Gastrocnemius medialis (tissue), 4 donors: ENCODE measurements at regions of chr1 and their contacts with region 1.

Region 1: DNA sequence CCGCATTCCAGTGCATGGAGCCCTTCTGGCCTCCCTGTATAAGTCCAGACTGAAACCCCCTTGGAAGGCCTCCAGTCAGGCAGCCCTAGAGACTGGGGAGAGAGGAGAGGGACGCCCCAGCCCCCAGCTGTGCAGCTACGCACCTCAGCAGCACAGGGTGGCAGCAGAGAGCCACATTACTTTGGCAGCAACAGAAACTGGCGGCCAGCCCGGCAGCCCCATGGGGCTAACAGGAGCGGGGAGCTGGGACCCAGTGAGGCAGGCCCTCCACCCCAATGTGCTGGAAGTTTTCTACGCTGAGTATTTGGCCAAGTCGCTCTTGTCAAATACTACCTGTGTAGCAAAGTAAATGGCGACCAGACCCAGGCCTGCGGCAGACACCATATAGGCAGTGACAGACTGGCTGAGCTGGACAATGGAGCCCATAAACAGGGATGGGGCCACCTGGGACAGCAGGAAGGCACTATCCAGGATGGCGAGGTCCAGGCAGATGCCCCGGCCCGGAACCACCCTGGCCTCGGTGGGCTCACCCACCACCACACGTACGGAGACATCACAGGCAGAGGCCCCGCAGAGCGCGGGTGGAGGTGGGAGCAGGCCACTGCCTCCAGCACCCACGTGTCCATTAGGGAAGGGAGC is 21.2 kb downstream of the SLC45A3 start:
- DNase-seq: peak; percentile 48 to 62
- ATAC-seq: peak; percentile 68 to 71
- H3K4me3 ChIP-seq: no peak overlapping the region
- H3K27ac ChIP-seq: no peak overlapping the region
- H3K4me1 ChIP-seq: peaks cover 0 to 4% of the 10 kb centered on the region in 2 donors
- H3K27me3 ChIP-seq: no peaks in the 10 kb centered on the region
- CTCF ChIP-seq: peak; percentile 78 to 90 (median 88)
- POLR2A ChIP-seq: no peak

Region 2: GRCh38 chr1:205591522-205592351 is 67.3 kb before region 1 on chr1:
- in situ Hi-C with region 1: loop called (anchors 5 kb)
- intact Hi-C with region 1: loop called (anchors 1 kb)
- DNase-seq: peak; percentile 58 to 74
- ATAC-seq: peak; percentile 80 to 94
- H3K4me3 ChIP-seq: peak overlapping the region; percentile 38 to 76 (median 46)
- H3K27ac ChIP-seq: no peak overlapping the region
- H3K4me1 ChIP-seq: no peaks in the 10 kb centered on the region
- H3K27me3 ChIP-seq: no peaks in the 10 kb centered on the region
- CTCF ChIP-seq: peak; percentile 98 to 99 (median 99)
- POLR2A ChIP-seq: no peak

Region 3: DNA sequence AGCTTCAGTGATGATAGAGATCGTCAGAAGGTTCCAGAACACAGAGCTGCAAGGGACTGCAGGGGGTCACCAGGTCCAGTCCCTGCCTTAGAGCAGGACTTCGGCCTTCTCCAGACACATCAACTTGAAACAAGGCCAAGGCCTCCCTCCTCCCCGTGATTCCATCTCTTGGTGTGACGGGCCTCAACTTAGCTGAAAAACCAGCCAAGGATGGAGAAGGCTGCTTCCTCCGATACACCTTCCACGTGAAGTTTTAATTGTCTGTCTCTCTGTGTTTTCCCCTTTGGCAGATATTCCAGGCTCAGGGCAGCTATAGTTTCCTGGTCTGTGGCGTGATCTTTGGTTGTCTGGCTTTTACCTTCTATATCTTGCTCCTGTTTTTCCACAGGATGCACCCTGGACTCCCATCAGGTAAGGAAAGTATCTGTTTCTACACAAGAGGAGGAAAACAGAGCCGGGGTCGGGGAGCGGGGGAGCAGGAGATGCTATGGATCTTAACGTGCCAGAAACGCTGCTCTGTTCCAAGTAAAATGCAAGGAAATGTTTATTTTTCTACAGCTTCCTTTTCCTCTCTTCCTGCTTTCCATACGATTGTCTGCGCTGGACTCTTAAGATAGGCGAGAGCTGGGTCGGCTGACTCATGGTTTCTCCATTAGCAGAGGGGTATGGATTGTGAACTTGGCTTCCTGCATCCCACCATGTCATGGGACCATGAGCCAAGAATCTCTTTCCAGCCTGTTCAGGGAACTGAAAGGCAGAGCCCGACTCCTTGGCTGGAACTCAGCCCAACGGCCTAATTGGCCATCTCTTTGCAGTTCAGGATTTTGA is 60.0 kb before region 1 on chr1:
- in situ Hi-C with region 1: loop called in 3 of 4 experiments (anchors 5 kb)
- intact Hi-C with region 1: no loop called
- DNase-seq: no peak
- ATAC-seq: peak in 1 of 2 donors; percentile 66
- H3K4me3 ChIP-seq: no peak overlapping the region
- H3K27ac ChIP-seq: peak overlapping the region; percentile 34 to 64 (median 51)
- H3K4me1 ChIP-seq: peaks cover 7 to 19% of the 10 kb centered on the region in 2 donors
- H3K27me3 ChIP-seq: no peaks in the 10 kb centered on the region
- CTCF ChIP-seq: no peak
- POLR2A ChIP-seq: no peak

Region 4: GRCh38 chr1:205711104-205712020 is 52.3 kb after region 1 on chr1:
- in situ Hi-C with region 1: loop called in 2 of 4 experiments (anchors 5 kb)
- intact Hi-C with region 1: loop called (anchors 1 kb)
- DNase-seq: peak; percentile 32
- ATAC-seq: peak; percentile 75 to 79
- H3K4me3 ChIP-seq: no peak overlapping the region
- H3K27ac ChIP-seq: peak overlapping the region in 1 of 4 donors; percentile 49
- H3K4me1 ChIP-seq: peaks cover 18 to 22% of the 10 kb centered on the region in 2 donors
- H3K27me3 ChIP-seq: no peaks in the 10 kb centered on the region
- CTCF ChIP-seq: peak; percentile 68 to 86 (median 74)
- POLR2A ChIP-seq: no peak

Region 5: DNA sequence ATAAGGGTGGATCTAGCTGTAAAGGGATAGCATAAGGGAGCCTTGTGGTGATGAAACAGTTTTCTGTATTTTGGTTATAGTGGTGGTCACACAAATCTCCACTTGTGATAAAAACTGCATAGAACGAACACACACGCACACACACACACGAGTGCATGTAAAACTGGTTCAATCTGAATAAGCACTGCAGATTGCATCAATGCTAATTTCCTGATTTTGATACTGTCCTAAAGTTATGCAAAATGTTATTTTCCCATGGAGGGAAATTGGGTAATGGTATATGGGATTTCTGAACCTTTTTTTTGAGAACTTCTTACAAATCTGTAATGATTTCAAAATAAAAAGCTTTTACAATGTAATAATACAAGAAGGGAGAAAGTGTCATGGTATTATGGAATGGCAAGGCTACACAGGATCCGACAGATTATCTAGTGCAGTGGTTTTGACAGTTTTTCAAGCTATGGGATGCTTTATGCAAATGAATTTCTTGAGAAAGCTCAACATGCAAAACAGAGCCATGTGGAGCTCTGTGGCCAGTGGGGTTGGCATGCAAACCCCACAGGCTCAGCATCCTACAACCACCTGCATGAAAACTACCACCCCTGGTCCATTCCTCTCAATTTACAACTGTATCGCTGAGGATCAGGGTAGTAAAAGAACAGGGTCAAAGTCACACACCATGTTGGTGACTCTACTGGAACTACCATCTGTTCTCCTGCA is 135.1 kb after region 1 on chr1:
- in situ Hi-C with region 1: no loop called
- intact Hi-C with region 1: no loop called
- DNase-seq: no peak
- ATAC-seq: no peak
- H3K4me3 ChIP-seq: no peak overlapping the region
- H3K27ac ChIP-seq: no peak overlapping the region
- H3K4me1 ChIP-seq: no peaks in the 10 kb centered on the region
- H3K27me3 ChIP-seq: no peaks in the 10 kb centered on the region
- CTCF ChIP-seq: no peak
- POLR2A ChIP-seq: no peak

Region 6: DNA sequence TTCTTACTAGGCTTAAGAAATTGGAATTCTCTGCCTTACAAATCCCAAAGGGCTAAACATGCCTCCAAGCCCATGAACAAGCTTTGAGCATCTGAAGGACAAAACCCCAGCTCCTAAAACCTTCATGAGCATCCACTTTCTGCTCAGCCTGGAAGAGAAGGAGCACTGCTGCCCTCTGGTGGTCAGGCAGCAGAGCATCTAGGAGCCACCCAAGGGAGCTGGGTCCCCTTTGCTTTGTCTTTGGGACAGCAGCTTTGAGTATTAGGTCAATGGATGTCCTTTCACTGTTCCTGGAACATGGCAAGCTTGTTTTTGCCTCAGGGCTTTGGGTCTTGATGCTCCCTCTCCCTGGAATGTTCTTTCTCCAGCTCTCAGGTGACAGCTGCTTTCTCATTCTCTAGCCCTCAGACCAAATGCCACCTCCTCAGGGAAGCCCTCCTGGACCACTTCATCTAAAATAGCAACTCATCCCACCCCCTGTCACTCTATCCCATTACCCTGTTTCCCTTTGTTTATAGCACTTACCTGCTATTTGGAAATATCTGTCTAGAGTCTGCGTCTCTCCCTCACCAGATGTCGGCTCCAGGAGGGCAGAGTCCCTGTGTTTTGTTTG is 318.4 kb after region 1 on chr1:
- in situ Hi-C with region 1: loop called in 1 of 4 experiments (anchors 25 kb)
- intact Hi-C with region 1: loop called (anchors 1 kb)
- DNase-seq: peak; percentile 45 to 50
- ATAC-seq: peak; percentile 83 to 88
- H3K4me3 ChIP-seq: no peak overlapping the region
- H3K27ac ChIP-seq: peak overlapping the region; percentile 66 to 85 (median 71)
- H3K4me1 ChIP-seq: peaks cover 14 to 20% of the 10 kb centered on the region in 2 donors
- H3K27me3 ChIP-seq: no peaks in the 10 kb centered on the region
- CTCF ChIP-seq: peak; percentile 91 to 97 (median 94)
- POLR2A ChIP-seq: no peak